ENCODE measurements at regions of chr1 and their contacts with region 1.

Region 1: GRCh38 chr1:171226747-171227370 is 21.4 kb upstream of the FMO1 start:
- DNase-seq: peak in 2 of 9 donors; percentile 2 to 3
- ATAC-seq: peak; percentile 69
- H3K4me3 ChIP-seq: no peak overlapping the region
- H3K4me3 Mint-ChIP-seq: no peak overlapping the region
- H3K27ac ChIP-seq: no peak overlapping the region
- H3K27ac Mint-ChIP-seq: no peak overlapping the region
- H3K4me1 ChIP-seq: no peaks in the 10 kb centered on the region
- H3K4me1 Mint-ChIP-seq: peaks cover 0 to 1% (median 0%) of the 10 kb centered on the region in 7 donors
- H3K27me3 ChIP-seq: peaks cover 0 to 3% of the 10 kb centered on the region in 2 donors
- H3K27me3 Mint-ChIP-seq: peaks cover 0 to 12% (median 4%) of the 10 kb centered on the region in 5 donors

Region 2: DNA sequence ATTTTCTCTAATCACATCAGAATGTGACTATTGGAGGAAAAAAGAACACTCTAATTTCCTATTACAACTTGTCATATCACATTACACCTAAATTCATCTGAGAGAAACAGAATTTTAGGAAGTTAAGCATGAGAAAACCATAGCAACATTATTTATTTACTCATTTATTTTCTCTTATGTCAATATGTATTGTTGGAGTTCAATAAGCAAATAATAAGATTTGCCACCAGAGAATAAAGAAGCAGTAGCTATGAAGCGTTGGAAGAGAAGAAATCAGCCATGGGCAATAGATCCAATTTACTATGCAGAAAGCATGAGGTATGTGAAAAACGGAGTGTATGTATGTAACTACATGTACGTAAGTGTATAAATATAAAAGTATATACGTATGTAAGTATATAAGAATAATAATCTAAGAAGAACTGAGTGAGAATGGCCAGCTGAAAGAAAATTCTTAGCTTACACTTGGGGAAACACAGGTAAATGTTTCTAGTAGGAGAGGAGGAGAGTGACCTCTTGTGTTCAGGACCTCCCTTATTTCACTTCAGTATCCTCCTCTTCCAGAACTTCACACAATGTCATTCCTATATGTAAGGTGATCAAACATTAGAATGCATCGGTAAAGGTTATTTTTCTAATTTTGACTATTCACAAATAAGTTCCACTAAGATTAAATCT is 299.1 kb before region 1 on chr1:
- CTCF ChIA-PET with region 1: no interaction called
- POLR2A ChIA-PET with region 1: no interaction called
- intact Hi-C with region 1: no loop called
- DNase-seq: no peak
- ATAC-seq: no peak
- H3K4me3 ChIP-seq: no peak overlapping the region
- H3K4me3 Mint-ChIP-seq: no peak overlapping the region
- H3K27ac ChIP-seq: no peak overlapping the region
- H3K27ac Mint-ChIP-seq: no peak overlapping the region
- H3K4me1 ChIP-seq: no peaks in the 10 kb centered on the region
- H3K4me1 Mint-ChIP-seq: no peaks in the 10 kb centered on the region
- H3K27me3 ChIP-seq: no peaks in the 10 kb centered on the region
- H3K27me3 Mint-ChIP-seq: peaks cover 2 to 13% (median 5%) of the 10 kb centered on the region in 5 donors

Region 3: GRCh38 chr1:171075041-171075440 is 151.8 kb before region 1 on chr1:
- CTCF ChIA-PET with region 1: no interaction called
- POLR2A ChIA-PET with region 1: no interaction called
- intact Hi-C with region 1: no loop called
- DNase-seq: no peak
- ATAC-seq: no peak
- H3K4me3 ChIP-seq: no peak overlapping the region
- H3K4me3 Mint-ChIP-seq: no peak overlapping the region
- H3K27ac ChIP-seq: no peak overlapping the region
- H3K27ac Mint-ChIP-seq: no peak overlapping the region
- H3K4me1 ChIP-seq: no peaks in the 10 kb centered on the region
- H3K4me1 Mint-ChIP-seq: no peaks in the 10 kb centered on the region
- H3K27me3 ChIP-seq: no peaks in the 10 kb centered on the region
- H3K27me3 Mint-ChIP-seq: peaks cover 0 to 15% (median 14%) of the 10 kb centered on the region in 5 donors

Region 4: GRCh38 chr1:171160211-171160610 is 66.6 kb before region 1 on chr1:
- CTCF ChIA-PET with region 1: no interaction called
- POLR2A ChIA-PET with region 1: no interaction called
- intact Hi-C with region 1: loop called in 1 of 2 experiments (anchors 10 kb)
- DNase-seq: no peak
- ATAC-seq: no peak
- H3K4me3 ChIP-seq: no peak overlapping the region
- H3K4me3 Mint-ChIP-seq: no peak overlapping the region
- H3K27ac ChIP-seq: no peak overlapping the region
- H3K27ac Mint-ChIP-seq: no peak overlapping the region
- H3K4me1 ChIP-seq: no peaks in the 10 kb centered on the region
- H3K4me1 Mint-ChIP-seq: no peaks in the 10 kb centered on the region
- H3K27me3 ChIP-seq: no peaks in the 10 kb centered on the region
- H3K27me3 Mint-ChIP-seq: peaks cover 3 to 30% (median 13%) of the 10 kb centered on the region in 5 donors

Measured in naive thymus-derived CD4-positive, alpha-beta T cell (primary cell).